Ascending aorta (tissue), 2 donors: ENCODE measurements at regions of chr14 and their contacts with region 1.

Region 1: GRCh38 chr14:32076278-32077080 is 625 bp upstream of the ARHGAP5 start:
- DNase-seq: peak; percentile 78 to 98
- H3K4me3 ChIP-seq: peak overlapping the region; percentile 64 to 82
- H3K27ac ChIP-seq: peak overlapping the region; percentile 92 to 97
- H3K4me1 ChIP-seq: peaks cover 0 to 30% of the 10 kb centered on the region in 2 donors
- H3K27me3 ChIP-seq: no peaks in the 10 kb centered on the region
- CTCF ChIP-seq: no peak

Region 2: DNA sequence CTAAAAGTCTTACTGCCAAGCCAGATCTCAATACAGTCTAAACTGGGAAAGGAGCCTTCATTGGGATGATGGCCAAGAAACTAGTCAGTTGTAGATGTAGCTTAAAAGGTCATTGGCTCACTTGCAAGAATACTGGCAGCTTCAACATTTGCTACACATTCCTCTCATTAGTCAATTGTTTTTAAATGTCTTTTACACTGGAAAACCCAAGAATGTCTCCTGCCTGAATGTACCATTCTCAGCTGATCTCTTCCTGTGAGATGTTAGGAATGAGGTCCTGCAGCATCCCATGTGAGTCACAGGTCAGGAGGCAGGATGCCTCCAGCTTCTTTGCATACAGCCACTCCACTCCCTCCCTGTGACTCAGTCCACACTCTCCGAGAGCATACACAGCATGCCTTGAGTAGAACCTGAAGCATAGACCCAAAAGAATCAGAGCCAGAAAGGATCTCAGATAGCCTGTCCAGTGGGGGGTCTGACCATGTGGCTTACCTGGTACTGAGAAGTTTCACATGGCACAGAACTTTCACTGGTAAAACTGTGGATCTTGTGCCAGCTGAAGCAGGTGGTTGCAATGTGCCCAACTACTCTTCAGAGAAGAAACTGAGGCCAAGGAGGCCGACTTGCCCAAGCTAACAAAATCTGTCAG is 812.9 kb before region 1 on chr14:
- intact Hi-C with region 1: loop called (anchors 5 kb)
- DNase-seq: peak; percentile 22 to 89
- H3K4me3 ChIP-seq: no peak overlapping the region
- H3K27ac ChIP-seq: peak overlapping the region; percentile 69 to 73
- H3K4me1 ChIP-seq: peaks cover 4 to 31% of the 10 kb centered on the region in 2 donors
- H3K27me3 ChIP-seq: no peaks in the 10 kb centered on the region
- CTCF ChIP-seq: no peak

Region 3: GRCh38 chr14:31561155-31561846 is 515.2 kb before region 1 on chr14 and contains the start of gene NUBPL:
- intact Hi-C with region 1: loop called (anchors 2 kb)
- DNase-seq: peak; percentile 79 to 97
- H3K4me3 ChIP-seq: peak within 1 kb of the TSS; percentile 88 to 98
- H3K27ac ChIP-seq: peak within 1 kb of the TSS; percentile 79 to 82
- H3K4me1 ChIP-seq: peaks cover 0 to 4% of the 10 kb centered on the region in 2 donors
- H3K27me3 ChIP-seq: no peaks in the 10 kb centered on the region
- CTCF ChIP-seq: no peak
- total RNA-seq, gene NUBPL: 1.7 TPM

Region 4: DNA sequence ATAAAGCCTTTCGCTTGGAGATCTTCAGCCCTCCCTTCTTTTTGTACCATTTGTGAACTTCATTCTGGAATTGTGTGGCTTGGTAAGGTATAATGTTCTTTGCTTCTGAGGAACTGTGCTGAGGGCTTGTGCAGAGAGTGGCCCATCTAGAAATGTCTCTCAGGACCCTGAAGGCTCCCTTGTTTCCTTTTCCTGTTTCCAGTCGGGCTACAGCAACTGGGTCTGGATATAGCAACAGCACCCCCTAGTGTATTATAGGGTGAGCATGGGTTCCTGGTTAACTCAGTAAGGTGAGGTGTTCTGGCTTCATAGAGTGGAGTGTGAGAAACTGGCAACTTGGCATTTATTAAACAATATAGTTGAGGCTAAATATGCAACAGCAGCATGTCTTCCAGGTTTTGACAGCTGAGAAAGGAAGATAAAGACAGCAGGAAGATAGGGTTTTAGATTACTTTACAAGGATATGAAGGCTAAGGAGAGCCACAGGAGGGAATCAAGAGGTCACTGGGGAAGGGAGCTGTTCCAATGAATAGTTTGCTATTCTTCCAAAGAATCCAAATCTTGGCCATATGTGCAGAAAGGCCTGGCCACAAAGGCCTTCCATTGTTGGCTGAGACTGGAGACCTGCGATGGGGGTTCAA is 175.7 kb after region 1 on chr14:
- intact Hi-C with region 1: loop called (anchors 1 kb)
- DNase-seq: peak in 1 of 2 donors; percentile 77
- H3K4me3 ChIP-seq: no peak overlapping the region
- H3K27ac ChIP-seq: no peak overlapping the region
- H3K4me1 ChIP-seq: peaks cover 0 to 7% of the 10 kb centered on the region in 2 donors
- H3K27me3 ChIP-seq: no peaks in the 10 kb centered on the region
- CTCF ChIP-seq: peak; percentile 59 to 92 (median 70)

Region 5: GRCh38 chr14:32509632-32510187 is 433.2 kb after region 1 on chr14:
- intact Hi-C with region 1: loop called (anchors 5 kb)
- DNase-seq: peak; percentile 46 to 91
- H3K4me3 ChIP-seq: peak overlapping the region in 1 of 2 donors; percentile 50
- H3K27ac ChIP-seq: peak overlapping the region; percentile 88 to 91
- H3K4me1 ChIP-seq: peaks cover 0 to 27% of the 10 kb centered on the region in 2 donors
- H3K27me3 ChIP-seq: no peaks in the 10 kb centered on the region
- CTCF ChIP-seq: no peak

Region 6: DNA sequence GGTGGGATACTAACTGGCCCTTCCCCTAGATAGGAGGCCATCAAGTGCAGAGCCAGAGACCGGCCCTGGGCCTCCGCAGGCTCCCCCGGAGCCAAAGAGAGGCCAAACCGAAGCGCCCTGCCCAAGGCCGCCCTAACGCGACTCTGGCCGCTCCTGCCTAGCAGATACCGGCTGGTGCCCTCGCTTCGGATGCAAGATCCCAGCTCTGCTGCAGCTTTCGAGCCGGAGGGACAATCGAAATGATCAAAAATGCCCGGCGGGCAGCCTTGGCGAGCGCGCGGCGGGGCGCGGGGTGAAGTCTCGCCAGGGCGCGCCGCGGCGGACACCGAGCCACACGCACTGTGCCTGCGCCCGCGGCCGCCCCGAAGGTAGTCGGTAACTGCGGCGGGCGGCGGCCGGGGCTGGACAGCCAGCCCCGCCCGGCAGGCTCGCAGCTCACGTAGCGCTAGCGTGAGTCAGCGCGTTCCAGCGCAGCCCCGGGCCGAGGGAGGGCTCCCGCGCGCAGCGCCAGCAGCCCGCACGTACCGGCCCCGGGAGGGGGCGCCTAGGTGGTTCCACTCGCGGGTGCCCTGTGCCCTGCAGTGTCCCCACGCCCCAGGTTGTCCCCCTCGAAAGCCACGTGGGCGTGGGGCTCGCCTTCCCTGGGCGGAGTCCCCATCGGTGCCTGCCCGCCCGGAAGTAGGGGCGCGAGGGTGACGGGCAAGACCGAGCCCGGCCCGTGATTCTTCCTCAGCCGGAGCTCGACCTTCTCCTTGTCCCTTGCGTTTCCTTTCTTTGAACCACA is 1983.6 kb after region 1 on chr14:
- intact Hi-C with region 1: loop called (anchors 5 kb)
- DNase-seq: peak; percentile 21 to 88
- H3K4me3 ChIP-seq: peak overlapping the region; percentile 76 to 85
- H3K27ac ChIP-seq: peak overlapping the region; percentile 92 to 95
- H3K4me1 ChIP-seq: peaks cover 0 to 7% of the 10 kb centered on the region in 2 donors
- H3K27me3 ChIP-seq: no peaks in the 10 kb centered on the region
- CTCF ChIP-seq: peak in 2 of 3 experiments; percentile 34 to 35